ENCODE measurements at regions of chr7 and their contacts with region 1.

Region 1: DNA sequence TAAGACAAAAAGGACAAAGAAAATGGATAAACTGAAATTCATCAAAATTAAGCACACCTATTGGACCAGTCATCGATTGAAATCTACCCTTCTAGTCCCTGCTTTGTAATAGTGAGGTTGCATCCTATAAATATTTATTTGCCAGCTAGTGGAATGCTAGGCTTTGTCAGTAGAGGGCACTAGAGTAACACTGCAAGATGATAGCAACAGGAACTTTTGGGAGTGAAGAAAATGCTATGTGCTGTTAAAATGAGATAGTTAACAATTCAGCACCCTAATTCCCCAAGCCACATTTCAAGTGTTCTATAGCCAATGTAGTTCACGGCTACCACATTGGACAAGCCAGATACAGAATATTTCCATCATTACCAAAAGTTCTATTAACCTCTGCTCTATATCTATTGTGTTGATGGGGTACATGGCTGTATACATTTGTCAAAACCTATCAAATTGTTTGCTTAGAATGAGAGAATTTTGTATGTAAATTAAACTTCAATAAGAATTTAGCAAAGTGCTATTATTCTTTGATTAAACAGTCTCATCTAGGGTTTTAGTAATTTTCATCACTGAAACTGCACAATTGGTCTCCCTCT is 69.8 kb downstream of the LSMEM1 start:
- DNase-seq: peak in 2 of 5 donors; percentile 56 to 69
- H3K4me3 ChIP-seq: no peak overlapping the region
- H3K27ac ChIP-seq: no peak overlapping the region
- H3K4me1 ChIP-seq: no peaks in the 10 kb centered on the region
- H3K27me3 ChIP-seq: no peaks in the 10 kb centered on the region
- CTCF ChIP-seq: peak; percentile 91

Region 2: DNA sequence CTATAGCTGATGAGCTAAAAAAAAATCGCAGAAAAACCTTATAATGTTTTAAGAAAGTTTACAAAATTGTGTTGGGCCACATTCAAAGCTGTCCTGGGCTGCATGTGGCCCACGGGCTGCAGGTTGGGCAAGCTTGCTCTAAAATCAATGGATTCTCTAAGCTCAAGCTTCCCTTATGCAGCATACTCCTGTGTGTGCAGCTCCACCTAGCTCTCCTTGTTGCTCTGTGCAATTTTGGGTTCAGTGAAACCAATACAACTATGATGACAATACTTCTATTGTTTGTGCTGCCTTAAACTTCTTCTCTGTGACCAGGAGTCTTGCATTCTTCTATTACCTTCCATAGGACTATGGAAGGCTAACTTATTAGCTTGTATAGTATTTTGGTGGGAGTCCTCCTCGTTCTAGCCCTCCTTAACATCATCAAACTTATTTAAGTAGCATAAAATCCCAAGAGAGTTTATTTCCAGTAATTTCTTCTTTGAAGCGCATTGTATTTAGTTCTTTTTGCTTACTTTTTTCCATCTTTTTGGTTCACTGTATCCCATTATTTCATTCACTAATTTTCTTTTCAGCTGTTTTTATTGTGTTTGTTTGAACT is 738.7 kb after region 1 on chr7:
- intact Hi-C with region 1: loop called (anchors 10 kb)
- DNase-seq: peak in 2 of 5 donors; percentile 17 to 26
- H3K4me3 ChIP-seq: no peak overlapping the region
- H3K27ac ChIP-seq: no peak overlapping the region
- H3K4me1 ChIP-seq: no peaks in the 10 kb centered on the region
- H3K27me3 ChIP-seq: no peaks in the 10 kb centered on the region
- CTCF ChIP-seq: peak; percentile 3